ENCODE measurements at regions of chr2 and their contacts with region 1.

Region 1: DNA sequence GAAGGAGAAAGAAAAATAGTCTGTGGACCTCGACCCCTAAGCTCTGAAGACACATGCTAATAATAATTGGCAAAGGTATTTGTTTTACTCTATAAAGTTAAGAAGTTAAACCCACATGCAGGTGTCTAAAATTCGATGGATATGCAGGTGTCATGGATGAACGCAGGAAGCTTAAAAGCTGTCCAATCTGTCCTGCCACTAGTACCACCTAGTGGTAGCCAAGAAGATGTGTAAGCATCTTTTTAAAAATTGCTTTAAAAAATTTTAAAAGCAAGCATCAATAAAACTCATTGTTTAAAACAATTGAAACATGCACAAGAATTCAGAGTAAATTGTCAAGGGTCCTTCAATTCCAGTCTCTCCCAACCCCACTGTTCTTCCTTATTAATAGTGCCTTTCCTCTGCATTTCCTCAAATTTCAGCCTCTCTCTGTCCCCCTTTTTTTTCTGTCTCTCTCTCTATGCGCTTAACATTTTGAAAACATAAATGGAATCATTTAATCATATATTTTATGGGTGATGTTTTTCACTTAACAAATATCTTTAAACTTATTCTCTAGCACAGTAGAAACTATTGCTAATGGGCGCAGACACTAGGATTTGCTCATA is 30.6 kb upstream of the PPP3R1 start:
- DNase-seq: no peak
- H3K4me3 ChIP-seq: no peak overlapping the region
- H3K27ac ChIP-seq: no peak overlapping the region
- H3K4me1 ChIP-seq: peaks cover 6 to 7% of the 10 kb centered on the region in 2 donors
- H3K27me3 ChIP-seq: no peaks in the 10 kb centered on the region
- CTCF ChIP-seq: peak; percentile 38 to 77 (median 64)
- POLR2A ChIP-seq: no peak

Region 2: DNA sequence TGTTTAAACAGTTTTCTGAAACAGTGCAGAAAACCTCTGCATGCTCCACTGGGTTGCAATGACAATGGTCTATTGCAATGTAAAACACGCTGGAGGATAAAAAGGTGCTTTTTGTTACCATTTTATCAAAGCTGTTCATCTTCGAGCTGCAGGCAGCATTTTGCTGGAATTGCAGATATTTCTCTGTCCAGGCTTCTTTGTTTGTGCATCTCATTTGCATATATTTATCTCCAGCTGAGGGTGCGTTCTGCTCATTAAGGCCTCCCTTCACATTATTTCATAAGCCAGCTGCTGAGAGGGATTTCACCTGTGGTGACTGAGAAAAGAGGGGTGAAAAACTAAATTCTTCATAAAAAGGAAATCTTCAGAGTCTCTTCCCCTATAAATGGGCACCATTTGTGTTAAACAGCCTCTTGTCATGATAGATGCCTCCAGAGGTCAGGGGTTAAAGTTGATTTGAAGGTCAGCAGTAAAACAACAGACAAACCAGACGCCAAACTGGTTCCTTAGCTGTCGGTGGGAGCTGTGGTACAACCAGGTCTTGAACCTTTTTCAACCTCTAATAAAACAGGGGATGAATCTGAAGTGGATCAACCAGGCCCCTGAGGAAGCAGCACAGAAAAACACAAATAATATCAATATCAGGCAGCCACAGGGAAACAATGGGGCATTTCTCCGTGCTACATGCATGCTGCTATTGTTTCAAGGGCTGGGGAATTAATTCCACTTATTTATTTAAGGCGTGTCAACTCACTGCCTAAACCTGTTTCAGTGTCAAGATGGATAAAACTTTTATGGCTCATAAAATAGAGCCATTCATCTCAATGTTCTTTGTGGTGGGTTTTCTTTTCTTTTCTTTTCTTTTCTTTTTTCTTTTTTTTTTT is 1582.9 kb before region 1 on chr2:
- intact Hi-C with region 1: no loop called
- DNase-seq: no peak
- H3K4me3 ChIP-seq: no peak overlapping the region
- H3K27ac ChIP-seq: no peak overlapping the region
- H3K4me1 ChIP-seq: no peaks in the 10 kb centered on the region
- H3K27me3 ChIP-seq: no peaks in the 10 kb centered on the region
- CTCF ChIP-seq: no peak
- POLR2A ChIP-seq: no peak

Region 3: GRCh38 chr2:68121873-68122679 is 160.8 kb before region 1 on chr2:
- intact Hi-C with region 1: loop called (anchors 5 kb)
- DNase-seq: peak; percentile 86 to 92
- H3K4me3 ChIP-seq: no peak overlapping the region
- H3K27ac ChIP-seq: no peak overlapping the region
- H3K4me1 ChIP-seq: no peaks in the 10 kb centered on the region
- H3K27me3 ChIP-seq: no peaks in the 10 kb centered on the region
- CTCF ChIP-seq: peak; percentile 71 to 97 (median 90)
- POLR2A ChIP-seq: no peak

Region 4: GRCh38 chr2:68169297-68169696 is 113.6 kb before region 1 on chr2:
- intact Hi-C with region 1: no loop called
- DNase-seq: no peak
- H3K4me3 ChIP-seq: no peak overlapping the region
- H3K27ac ChIP-seq: no peak overlapping the region
- H3K4me1 ChIP-seq: no peaks in the 10 kb centered on the region
- H3K27me3 ChIP-seq: no peaks in the 10 kb centered on the region
- CTCF ChIP-seq: no peak
- POLR2A ChIP-seq: no peak

Region 5: GRCh38 chr2:68196120-68196716 is 86.7 kb before region 1 on chr2:
- intact Hi-C with region 1: loop called (anchors 10 kb)
- DNase-seq: peak in 1 of 2 donors; percentile 45
- H3K4me3 ChIP-seq: no peak overlapping the region
- H3K27ac ChIP-seq: no peak overlapping the region
- H3K4me1 ChIP-seq: peaks cover 0 to 11% of the 10 kb centered on the region in 2 donors
- H3K27me3 ChIP-seq: no peaks in the 10 kb centered on the region
- CTCF ChIP-seq: peak in 4 of 6 experiments; percentile 43 to 64 (median 60)
- POLR2A ChIP-seq: no peak

Region 6: DNA sequence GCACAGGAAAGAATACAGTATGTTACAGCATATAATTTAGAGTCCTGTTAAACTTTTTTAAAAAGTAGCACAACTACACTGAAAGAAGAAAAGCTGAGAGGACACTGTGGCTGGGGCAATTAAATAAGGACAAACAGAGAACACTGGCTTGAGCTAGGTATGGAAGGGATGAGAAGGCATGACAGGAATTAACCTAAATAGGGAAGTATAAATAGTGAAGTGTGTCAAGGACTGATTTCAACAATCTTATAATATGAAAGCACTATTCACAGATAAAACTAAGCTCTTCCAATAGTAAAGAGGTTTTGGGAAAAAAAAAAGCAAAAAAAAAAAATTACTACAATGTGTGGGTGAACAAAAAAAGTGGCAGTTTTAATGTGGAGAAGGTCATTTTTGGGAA is 76.1 kb before region 1 on chr2:
- intact Hi-C with region 1: no loop called
- DNase-seq: no peak
- H3K4me3 ChIP-seq: no peak overlapping the region
- H3K27ac ChIP-seq: no peak overlapping the region
- H3K4me1 ChIP-seq: peaks cover 0 to 5% of the 10 kb centered on the region in 2 donors
- H3K27me3 ChIP-seq: no peaks in the 10 kb centered on the region
- CTCF ChIP-seq: no peak
- POLR2A ChIP-seq: no peak

Region 7: DNA sequence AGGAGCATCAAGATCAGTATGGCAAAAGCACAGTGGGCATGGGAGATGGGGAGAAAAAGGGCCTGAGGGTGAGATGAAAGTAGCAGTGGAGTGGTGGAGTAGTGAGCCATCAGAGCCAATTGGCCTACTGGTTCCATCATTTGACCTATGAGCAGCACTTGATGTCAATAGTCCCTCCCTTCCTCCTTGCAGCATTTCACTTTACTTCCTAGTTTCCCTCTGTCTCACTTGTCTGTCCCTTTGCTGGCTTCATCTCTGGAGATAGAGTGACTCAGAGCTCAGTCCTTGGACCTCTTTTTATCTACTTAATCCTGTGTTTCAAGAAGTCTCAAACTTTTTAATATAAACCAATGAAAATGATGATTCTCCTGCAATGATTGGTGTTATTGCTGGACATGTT is 152.1 kb after region 1 on chr2:
- intact Hi-C with region 1: no loop called
- DNase-seq: no peak
- H3K4me3 ChIP-seq: no peak overlapping the region
- H3K27ac ChIP-seq: no peak overlapping the region
- H3K4me1 ChIP-seq: no peaks in the 10 kb centered on the region
- H3K27me3 ChIP-seq: no peaks in the 10 kb centered on the region
- CTCF ChIP-seq: no peak
- POLR2A ChIP-seq: no peak